Common myeloid progenitor, CD34-positive (primary cell): ENCODE measurements at regions of chr6 and their contacts with region 1.

Region 1: GRCh38 chr6:135202836-135203235 is 21.7 kb downstream of the MYB start:
- DNase-seq: no peak
- H3K4me3 ChIP-seq: no peak overlapping the region
- H3K27ac ChIP-seq: peak overlapping the region in 1 of 2 experiments; percentile 28
- H3K4me1 ChIP-seq: peaks cover 0 to 2% (median under 1%) of the 10 kb centered on the region in 4 experiments
- H3K27me3 ChIP-seq: no peaks in the 10 kb centered on the region

Region 2: GRCh38 chr6:134911547-134911946 is 291.3 kb before region 1 on chr6:
- CTCF ChIA-PET with region 1: no interaction called
- POLR2A ChIA-PET with region 1: no interaction called
- DNase-seq: no peak
- H3K4me3 ChIP-seq: no peak overlapping the region
- H3K27ac ChIP-seq: no peak overlapping the region
- H3K4me1 ChIP-seq: no peaks in the 10 kb centered on the region
- H3K27me3 ChIP-seq: peaks cover 0 to 4% (median 2%) of the 10 kb centered on the region in 5 experiments

Region 3: DNA sequence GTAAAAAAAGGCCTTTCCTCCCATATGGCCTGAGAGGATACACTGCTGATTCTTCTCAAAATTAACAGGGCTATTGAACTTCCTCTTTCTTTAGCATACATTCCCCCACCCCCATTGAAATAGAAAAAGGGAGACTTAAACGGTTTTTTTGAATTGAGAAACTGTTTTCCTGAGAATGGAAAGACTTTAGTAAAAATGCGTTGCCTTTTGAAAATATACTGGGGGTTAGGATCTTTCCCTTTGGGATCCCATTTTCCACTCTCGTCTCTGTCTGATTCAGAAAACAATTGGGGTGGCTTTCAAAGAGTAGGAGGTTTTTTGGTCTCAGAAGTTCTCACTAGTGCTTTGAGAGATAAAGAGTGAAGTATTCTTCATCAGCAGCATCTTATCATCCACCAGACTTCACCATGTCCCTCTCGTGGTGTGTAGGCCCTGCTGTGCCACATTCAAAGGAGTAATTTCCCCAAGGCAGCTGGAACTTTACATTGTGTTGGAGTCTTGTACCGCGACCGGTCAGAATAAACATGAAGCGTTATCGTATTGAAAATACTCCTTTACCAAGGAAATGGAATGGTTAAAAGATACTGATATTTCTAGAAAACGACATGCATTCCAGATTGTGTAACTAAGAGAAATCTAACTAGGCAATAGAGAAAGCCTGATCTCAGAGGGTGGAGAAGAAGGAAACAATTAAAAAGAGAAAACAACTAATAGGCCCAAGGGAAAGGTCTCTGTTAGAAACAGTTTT is 11.2 kb before region 1 on chr6:
- CTCF ChIA-PET with region 1: interaction called, 11 read pairs
- POLR2A ChIA-PET with region 1: no interaction called
- DNase-seq: peak; percentile 49 to 87 (median 81)
- H3K4me3 ChIP-seq: peak overlapping the region in 3 of 7 experiments; percentile 21 to 31 (median 22)
- H3K27ac ChIP-seq: peak overlapping the region; percentile 21 to 78
- H3K4me1 ChIP-seq: peaks cover 59 to 93% (median 78%) of the 10 kb centered on the region in 4 experiments
- H3K27me3 ChIP-seq: no peaks in the 10 kb centered on the region